Gastrocnemius medialis (tissue), 4 donors: ENCODE measurements at regions of chr19 and their contacts with region 1.

Region 1: DNA sequence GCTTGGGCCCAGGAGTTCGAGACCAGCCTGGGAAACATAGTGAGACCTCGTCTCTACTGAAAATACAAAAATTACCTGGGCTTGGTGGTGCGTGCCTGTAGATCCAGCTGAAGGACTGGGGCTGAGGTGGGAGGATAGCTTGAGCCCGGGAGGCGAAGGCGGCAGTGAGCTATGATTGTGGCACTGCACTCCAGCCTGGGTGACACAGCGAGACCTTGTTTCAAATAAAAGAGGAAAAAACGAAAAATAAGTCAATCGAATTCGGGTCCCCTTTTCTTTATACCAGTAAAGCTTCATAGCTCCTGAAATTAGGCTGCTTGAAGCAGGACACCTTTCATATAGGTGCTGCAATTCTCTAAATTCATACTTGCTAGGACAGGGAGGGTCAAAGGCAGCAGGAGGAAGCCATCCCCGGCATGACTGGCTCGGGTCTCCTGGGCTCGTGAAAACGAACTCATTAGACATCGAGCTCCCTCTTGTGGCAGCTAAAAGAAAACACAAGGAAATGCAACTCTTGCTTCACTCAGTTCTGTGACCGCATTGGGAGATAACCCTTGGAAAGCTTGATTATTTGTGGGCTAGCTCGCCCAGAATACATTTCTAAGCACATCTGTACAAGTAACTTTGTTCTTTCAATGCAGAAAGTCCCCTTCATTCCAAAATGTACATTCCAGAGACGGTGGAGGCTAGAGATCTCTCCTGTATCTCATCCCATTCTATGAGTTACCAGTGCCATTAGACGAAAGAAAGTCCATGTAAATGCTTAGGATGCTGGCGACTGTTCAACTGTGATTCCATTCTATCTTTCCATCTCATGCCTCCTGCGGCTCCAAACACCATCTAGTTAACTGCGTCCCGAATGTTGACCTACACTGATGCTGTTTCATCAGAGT is 16.8 kb downstream of the FPR2 start:
- DNase-seq: peak; percentile 29 to 48
- ATAC-seq: no peak
- H3K4me3 ChIP-seq: no peak overlapping the region
- H3K27ac ChIP-seq: no peak overlapping the region
- H3K4me1 ChIP-seq: no peaks in the 10 kb centered on the region
- H3K27me3 ChIP-seq: no peaks in the 10 kb centered on the region
- CTCF ChIP-seq: peak in 4 of 5 experiments; percentile 31 to 58 (median 48)
- POLR2A ChIP-seq: no peak

Region 2: DNA sequence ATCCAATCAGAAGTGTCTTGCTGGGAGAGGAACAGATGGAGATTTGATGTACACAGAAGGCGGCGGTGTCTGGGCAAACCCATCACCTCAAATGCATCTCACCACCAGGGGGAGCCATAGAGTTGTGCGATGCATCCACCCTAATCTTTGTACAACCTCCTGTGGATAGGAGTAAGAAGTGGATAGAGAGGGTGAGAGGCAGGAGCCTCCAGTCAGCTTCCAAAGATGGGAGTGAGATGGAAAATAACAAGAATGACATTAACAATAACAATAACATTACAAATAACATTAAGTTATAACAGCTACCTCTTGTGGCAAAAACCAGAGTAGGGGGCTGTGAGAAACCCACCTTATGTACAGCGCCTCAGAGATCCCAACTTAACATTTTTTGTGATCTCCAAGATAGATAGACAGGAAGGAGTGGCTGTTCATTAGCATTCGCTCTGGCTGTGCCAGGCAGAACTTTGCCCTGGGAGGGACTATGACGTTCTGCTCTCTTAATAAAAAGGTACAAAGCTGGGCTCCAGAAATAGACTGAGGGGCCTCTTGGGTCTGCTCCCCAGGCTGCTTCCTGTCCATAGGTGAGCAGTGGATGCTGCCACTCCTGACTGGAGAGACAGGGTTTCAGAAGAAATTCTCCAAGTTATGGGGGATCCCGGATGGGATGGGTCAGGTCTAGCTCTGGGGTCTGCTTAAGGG is 304.7 kb before region 1 on chr19:
- in situ Hi-C with region 1: no loop called
- intact Hi-C with region 1: loop called (anchors 2 kb)
- DNase-seq: peak in 1 of 2 donors; percentile 27
- ATAC-seq: no peak
- H3K4me3 ChIP-seq: no peak overlapping the region
- H3K27ac ChIP-seq: no peak overlapping the region
- H3K4me1 ChIP-seq: no peaks in the 10 kb centered on the region
- H3K27me3 ChIP-seq: peaks cover 0 to 4% (median 0%) of the 10 kb centered on the region in 3 donors
- CTCF ChIP-seq: peak in 4 of 5 experiments; percentile 49 to 74 (median 60)
- POLR2A ChIP-seq: no peak

Region 3: DNA sequence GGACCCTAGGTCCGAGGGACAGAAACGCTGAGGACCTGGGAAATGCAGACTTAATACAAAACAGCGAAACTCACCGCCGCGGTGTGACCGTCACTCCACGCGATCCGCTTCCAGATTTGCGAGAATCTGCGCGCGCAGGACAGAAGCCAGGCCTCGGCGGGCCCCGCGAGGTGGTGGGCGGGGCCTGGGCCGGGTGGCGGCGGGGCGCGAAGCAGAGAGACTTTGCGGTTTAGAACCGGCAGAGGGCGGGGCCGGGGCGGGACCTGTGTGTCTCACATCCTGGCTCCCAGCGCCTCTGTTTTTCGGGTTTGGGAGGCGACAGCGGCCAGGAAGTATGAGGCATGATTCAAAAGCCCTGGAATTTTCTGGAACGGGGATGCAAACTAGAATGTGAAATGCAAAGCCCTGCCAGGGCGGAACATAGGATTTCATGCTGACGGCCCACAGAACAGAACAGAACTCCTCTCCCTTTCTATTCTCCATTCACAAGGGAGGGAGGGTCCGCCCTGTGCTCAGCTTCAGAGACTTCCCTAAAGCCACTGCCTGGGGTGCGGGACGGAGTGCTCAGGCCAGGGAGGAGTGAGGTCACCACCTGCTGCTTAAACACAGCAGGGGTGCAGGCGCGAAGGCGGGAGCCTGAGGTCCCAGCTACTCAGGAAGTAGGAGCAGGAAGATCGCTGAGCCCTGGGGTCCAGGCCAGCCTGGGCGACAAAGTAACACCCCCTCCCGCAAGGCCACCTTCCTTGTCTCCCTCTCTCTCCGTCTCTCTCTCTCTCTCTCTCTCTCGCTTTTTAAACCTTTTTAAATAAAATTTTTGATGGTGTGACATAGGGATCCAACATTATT is 912.8 kb after region 1 on chr19:
- in situ Hi-C with region 1: no loop called
- intact Hi-C with region 1: no loop called
- DNase-seq: peak; percentile 76 to 82
- ATAC-seq: peak; percentile 89 to 92
- H3K4me3 ChIP-seq: peak overlapping the region; percentile 57 to 70 (median 60)
- H3K27ac ChIP-seq: peak overlapping the region; percentile 81 to 84 (median 82)
- H3K4me1 ChIP-seq: peaks cover 3 to 8% of the 10 kb centered on the region in 2 donors
- H3K27me3 ChIP-seq: peaks cover 0 to 6% (median 3%) of the 10 kb centered on the region in 3 donors
- CTCF ChIP-seq: peak in 2 of 5 experiments; percentile 26 to 34
- POLR2A ChIP-seq: peak; percentile 38 to 72